Tibial artery (tissue), 4 donors: ENCODE measurements at regions of chr14 and their contacts with region 1.

Region 1: GRCh38 chr14:65153101-65153500 is 50.8 kb upstream of the MAX start:
- DNase-seq: no peak
- H3K4me3 ChIP-seq: no peak overlapping the region
- H3K27ac ChIP-seq: no peak overlapping the region
- H3K4me1 ChIP-seq: peaks cover 0 to 20% (median 13%) of the 10 kb centered on the region in 4 donors
- H3K27me3 ChIP-seq: no peaks in the 10 kb centered on the region
- CTCF ChIP-seq: no peak

Region 2: GRCh38 chr14:65110525-65110924 is 42.6 kb before region 1 on chr14:
- intact Hi-C with region 1: loop called (anchors 5 kb)
- DNase-seq: no peak
- H3K4me3 ChIP-seq: no peak overlapping the region
- H3K27ac ChIP-seq: no peak overlapping the region
- H3K4me1 ChIP-seq: no peaks in the 10 kb centered on the region
- H3K27me3 ChIP-seq: no peaks in the 10 kb centered on the region
- CTCF ChIP-seq: no peak

Region 3: DNA sequence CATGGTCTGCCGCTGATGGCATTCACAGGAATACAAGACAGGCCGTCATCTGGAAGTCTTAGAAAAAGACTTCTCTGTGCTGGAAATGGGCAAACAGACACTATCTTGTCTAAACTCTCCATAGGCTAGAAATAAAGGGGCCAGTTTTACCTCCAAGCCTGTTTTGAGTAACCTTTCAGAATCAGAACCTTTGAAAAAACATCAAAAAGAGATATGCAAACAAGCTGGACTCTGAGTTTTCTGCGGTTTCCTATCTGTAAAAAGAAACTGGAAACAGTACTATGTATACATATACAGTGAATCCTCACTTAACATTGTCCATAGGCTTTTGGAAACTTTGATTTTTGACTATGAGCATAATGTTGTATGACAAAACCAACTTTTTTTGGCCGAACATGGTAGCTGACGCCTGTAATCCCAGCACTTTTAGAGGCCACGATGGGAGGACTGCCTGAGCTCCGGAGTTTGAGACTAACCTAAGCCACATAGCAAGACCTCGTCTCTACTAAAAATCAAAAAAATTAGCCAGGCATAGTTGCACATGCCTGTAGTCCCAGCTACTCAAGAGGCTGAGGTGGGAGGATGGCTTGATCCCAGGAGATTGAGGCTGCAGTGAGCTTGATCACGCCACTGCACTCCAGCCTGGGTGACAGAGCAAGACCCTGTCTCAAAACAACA is 42.1 kb after region 1 on chr14:
- intact Hi-C with region 1: no loop called
- DNase-seq: no peak
- H3K4me3 ChIP-seq: no peak overlapping the region
- H3K27ac ChIP-seq: no peak overlapping the region
- H3K4me1 ChIP-seq: no peaks in the 10 kb centered on the region
- H3K27me3 ChIP-seq: peaks cover 0 to 4% of the 10 kb centered on the region in 2 donors
- CTCF ChIP-seq: no peak